ENCODE measurements at regions of chr3 and their contacts with region 1.

Region 1: GRCh38 chr3:33218446-33219174 is at the start of gene SUSD5:
- DNase-seq: no peak
- H3K4me3 ChIP-seq: peak within 1 kb of the TSS; percentile 19
- CTCF ChIP-seq: no peak
- POLR2A ChIP-seq: no peak
- total RNA-seq, gene SUSD5: 1.1 to 4.4 (median 1.9) TPM

Region 2: GRCh38 chr3:31495971-31496665 is 1722.5 kb before region 1 on chr3:
- intact Hi-C with region 1: loop called (anchors 10 kb)
- DNase-seq: no peak
- H3K4me3 ChIP-seq: no peak overlapping the region
- CTCF ChIP-seq: no peak
- POLR2A ChIP-seq: no peak

Region 3: DNA sequence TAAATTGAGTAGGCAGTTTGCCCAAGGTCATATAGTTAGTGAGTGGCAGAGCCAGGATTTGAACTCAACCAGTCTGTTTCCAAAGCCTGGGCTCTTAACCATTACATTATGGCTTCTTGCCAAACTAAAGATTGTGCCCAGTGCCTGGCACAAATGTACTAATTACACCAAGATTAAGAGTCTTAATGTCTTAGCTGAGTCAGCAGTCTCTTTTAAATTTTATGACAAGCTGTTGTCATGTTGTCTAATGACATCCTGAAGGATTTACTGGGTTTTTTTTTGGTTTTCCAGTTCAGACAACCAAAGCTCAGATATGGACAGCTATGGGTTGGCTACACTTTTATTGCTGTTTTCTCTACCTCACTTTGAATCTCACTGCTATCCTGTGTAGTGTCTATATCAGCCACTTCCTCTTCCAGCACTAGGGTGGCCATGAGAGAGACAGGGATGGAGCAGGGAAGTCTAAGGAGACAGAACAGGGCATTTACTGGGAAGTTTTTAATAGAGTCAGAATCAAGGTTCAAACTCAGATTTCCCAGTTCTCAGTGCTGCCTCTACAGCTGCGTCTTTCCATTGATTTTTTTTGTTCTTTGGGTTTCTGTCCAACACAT is 69.2 kb after region 1 on chr3:
- intact Hi-C with region 1: no loop called
- DNase-seq: no peak
- H3K4me3 ChIP-seq: no peak overlapping the region
- CTCF ChIP-seq: no peak
- POLR2A ChIP-seq: no peak